Activated CD4-positive, alpha-beta T cell treated with anti-CD3 and anti-CD28 coated beads for 36 hours (primary cell): ENCODE measurements at regions of chr18 and their contacts with region 1.

Region 1: DNA sequence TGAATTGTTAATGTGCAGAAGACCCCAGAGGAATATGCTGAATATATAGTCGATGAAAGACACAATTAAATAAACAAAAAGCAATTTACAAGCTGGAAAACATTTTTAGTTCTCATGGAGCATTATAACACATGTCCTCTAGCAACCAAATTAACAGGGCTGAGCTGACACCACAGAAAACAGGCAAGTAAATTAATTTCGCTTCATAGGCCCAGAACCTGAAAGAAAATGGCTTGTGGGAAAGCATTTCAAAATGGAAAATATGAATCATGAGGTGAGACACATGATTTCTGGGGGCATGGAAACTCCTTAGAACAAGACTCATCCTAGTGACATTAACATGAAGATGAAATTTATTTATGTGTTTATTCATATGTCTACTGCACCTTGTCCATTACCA is 25.0 kb upstream of the RNF152 start:
- DNase-seq: no peak
- ATAC-seq: peak; percentile 48
- H3K4me3 Mint-ChIP-seq: no peak overlapping the region
- H3K27ac Mint-ChIP-seq: no peak overlapping the region
- H3K4me1 Mint-ChIP-seq: peaks cover 20% of the 10 kb centered on the region
- H3K27me3 Mint-ChIP-seq: peaks cover 2% of the 10 kb centered on the region

Region 2: DNA sequence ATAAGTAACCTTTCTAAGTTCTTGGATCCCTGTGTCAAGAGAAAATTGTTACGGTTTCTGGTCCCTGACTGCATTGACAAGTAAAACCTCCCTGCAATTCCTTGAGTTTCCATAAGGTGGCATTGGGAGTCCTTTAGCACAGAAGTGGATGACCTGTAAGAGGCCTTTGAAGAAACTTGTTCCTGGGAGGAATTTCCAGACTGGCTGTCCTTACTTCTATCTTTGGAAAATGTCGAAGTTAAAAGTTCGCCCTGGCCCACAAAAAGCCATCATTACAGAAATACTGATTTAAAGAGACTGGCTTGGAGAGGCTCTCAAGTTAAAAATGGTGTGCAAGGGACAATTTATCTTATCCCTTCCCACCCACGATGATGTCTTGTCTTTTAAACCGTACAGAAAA is 366.2 kb before region 1 on chr18:
- CTCF ChIA-PET with region 1: no interaction called
- POLR2A ChIA-PET with region 1: no interaction called
- intact Hi-C with region 1: no loop called
- DNase-seq: peak; percentile 10
- ATAC-seq: no peak
- H3K4me3 Mint-ChIP-seq: no peak overlapping the region
- H3K27ac Mint-ChIP-seq: no peak overlapping the region
- H3K4me1 Mint-ChIP-seq: peaks cover 11% of the 10 kb centered on the region
- H3K27me3 Mint-ChIP-seq: peaks cover 10% of the 10 kb centered on the region

Region 3: GRCh38 chr18:61975526-61976326 is 57.9 kb after region 1 on chr18:
- CTCF ChIA-PET with region 1: no interaction called
- POLR2A ChIA-PET with region 1: no interaction called
- intact Hi-C with region 1: loop called in 1 of 2 experiments (anchors 2 kb)
- DNase-seq: peak; percentile 27
- ATAC-seq: peak; percentile 78
- H3K4me3 Mint-ChIP-seq: no peak overlapping the region
- H3K27ac Mint-ChIP-seq: peak overlapping the region; percentile 55
- H3K4me1 Mint-ChIP-seq: peaks cover 28% of the 10 kb centered on the region
- H3K27me3 Mint-ChIP-seq: no peaks in the 10 kb centered on the region

Region 4: DNA sequence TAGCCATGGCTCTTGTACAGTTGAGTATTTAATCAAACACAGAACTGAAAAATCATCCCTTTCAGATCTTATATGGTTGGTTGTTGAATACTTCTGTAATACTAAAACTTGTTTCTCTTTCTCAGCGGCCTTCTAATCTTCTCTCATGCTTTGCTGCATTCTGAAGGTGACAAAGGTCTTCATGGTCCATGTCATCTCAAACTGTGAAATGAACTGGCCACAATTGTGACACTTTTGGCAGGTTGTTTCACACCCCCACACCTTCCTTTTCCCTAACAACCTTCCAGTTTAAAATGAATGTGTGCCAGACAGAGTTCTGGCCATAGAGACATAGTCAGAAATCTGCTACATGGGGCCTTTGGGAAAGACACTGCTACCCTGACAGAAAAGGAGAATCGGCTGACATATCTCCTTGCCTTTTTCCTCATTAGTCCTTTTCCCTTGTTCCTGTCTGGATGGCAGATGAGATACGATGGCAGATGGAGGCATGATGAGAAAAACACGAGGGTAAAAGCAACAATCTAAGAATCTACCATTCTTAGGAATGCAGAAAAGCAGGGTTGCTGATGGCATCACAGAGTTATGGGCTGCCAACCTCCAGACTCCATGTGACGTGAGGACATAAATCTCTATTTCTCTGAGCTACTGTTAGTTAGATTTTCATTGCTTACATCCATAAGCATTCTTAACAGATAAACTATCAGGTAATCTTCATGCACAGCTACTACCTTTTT is 162.5 kb after region 1 on chr18:
- CTCF ChIA-PET with region 1: no interaction called
- POLR2A ChIA-PET with region 1: no interaction called
- intact Hi-C with region 1: no loop called
- DNase-seq: no peak
- ATAC-seq: no peak
- H3K4me3 Mint-ChIP-seq: no peak overlapping the region
- H3K27ac Mint-ChIP-seq: no peak overlapping the region
- H3K4me1 Mint-ChIP-seq: peaks cover 5% of the 10 kb centered on the region
- H3K27me3 Mint-ChIP-seq: no peaks in the 10 kb centered on the region